ENCODE measurements at regions of chr3 and their contacts with region 1.

Region 1: GRCh38 chr3:9902372-9903237 is at the start of gene IL17RE:
- DNase-seq: no peak
- H3K4me3 Mint-ChIP-seq: no peak within 1 kb of the TSS
- H3K27ac Mint-ChIP-seq: no peak within 1 kb of the TSS
- H3K4me1 Mint-ChIP-seq: peaks cover 38% of the 10 kb centered on the region
- H3K27me3 Mint-ChIP-seq: no peaks in the 10 kb centered on the region
- total RNA-seq, gene IL17RE: 0.24 to 0.25 TPM

Region 2: DNA sequence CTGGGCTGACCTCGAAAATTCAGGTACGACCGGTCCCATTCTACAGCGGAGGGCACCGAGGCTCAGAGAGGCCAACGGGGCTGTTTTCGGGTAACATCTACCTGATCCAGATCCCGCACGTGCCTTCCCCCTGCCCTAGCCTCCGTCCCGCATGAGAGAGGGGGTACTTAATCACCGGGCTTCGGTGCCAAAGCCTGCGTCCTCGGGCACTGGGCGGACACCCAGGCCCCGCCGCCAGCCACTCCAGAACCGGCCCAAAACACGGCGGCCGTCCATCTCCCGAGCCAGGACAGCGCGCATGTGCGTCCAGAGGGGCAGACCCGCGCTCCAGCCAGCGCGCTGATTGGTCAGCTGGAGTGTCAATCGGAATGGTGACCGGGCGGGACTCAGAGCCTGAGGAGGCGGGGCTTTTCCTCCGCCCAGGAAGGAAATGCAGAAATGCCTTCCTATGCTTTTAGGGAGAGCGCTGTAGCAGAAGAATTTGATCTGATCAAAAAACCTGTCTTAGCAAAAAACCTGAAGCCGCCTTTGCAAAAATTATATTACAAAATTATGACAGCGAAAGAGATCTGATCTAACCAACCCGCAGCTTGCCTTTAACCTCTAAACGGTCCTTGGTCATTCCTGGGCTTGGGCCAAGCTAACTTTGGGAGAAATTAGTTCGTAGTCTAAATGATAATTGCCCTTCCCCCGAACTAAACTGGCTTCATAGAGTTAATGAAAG is 58.7 kb before region 1 on chr3 and contains the start of gene RPUSD3:
- CTCF ChIA-PET with region 1: interaction called, 4 read pairs
- intact Hi-C with region 1: loop called (anchors 2 kb)
- DNase-seq: peak; percentile 98
- H3K4me3 Mint-ChIP-seq: peak within 1 kb of the TSS; percentile 98
- H3K27ac Mint-ChIP-seq: peak within 1 kb of the TSS; percentile 89
- H3K4me1 Mint-ChIP-seq: peaks cover 30% of the 10 kb centered on the region
- H3K27me3 Mint-ChIP-seq: no peaks in the 10 kb centered on the region
- total RNA-seq, gene RPUSD3: 82.0 to 83.7 TPM

Region 3: DNA sequence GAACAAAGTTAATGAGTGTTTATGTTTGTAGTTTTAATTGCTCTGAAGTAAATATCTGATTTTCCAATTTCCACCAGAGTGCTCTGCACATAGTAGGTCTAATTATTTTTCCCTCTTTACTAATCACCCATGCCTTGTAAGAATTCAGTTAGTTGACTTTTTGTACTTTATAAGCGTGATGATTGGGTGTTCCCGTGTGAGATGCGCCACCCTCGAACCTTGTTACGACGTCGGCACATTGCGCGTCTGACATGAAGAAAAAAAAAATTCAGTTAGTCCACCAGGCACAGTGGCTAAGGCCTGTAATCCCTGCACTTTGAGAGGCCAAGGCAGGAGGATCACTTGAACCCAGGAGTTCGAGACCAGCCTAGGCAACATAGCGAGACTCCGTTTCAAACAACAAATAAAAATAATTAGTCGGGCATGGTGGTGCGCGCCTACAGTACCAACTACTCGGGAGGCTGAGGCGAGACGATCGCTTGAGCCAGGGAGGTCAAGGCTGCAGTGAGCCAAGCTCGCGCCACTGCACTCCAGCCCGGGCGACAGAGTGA is 238.5 kb after region 1 on chr3:
- CTCF ChIA-PET with region 1: no interaction called
- intact Hi-C with region 1: no loop called
- DNase-seq: no peak
- H3K4me3 Mint-ChIP-seq: peak overlapping the region; percentile 84
- H3K27ac Mint-ChIP-seq: peak overlapping the region; percentile 87
- H3K4me1 Mint-ChIP-seq: peaks cover 24% of the 10 kb centered on the region
- H3K27me3 Mint-ChIP-seq: no peaks in the 10 kb centered on the region